Naive thymus-derived CD4-positive, alpha-beta T cell (primary cell): ENCODE measurements at regions of chr7 and their contacts with region 1.

Region 1: GRCh38 chr7:33895025-33895804 is 10.1 kb upstream of the BMPER start:
- DNase-seq: peak; percentile 4 to 68 (median 48)
- ATAC-seq: peak; percentile 87
- H3K4me3 ChIP-seq: no peak overlapping the region
- H3K4me3 Mint-ChIP-seq: peak overlapping the region in 4 of 10 donors; percentile 21 to 68 (median 47)
- H3K27ac ChIP-seq: no peak overlapping the region
- H3K27ac Mint-ChIP-seq: no peak overlapping the region
- H3K4me1 ChIP-seq: no peaks in the 10 kb centered on the region
- H3K4me1 Mint-ChIP-seq: peaks cover 0 to 9% (median 5%) of the 10 kb centered on the region in 7 donors
- H3K27me3 ChIP-seq: no peaks in the 10 kb centered on the region
- H3K27me3 Mint-ChIP-seq: peaks cover 30 to 57% (median 48%) of the 10 kb centered on the region in 5 donors

Region 2: GRCh38 chr7:33185786-33186185 is 709.4 kb before region 1 on chr7:
- CTCF ChIA-PET with region 1: interaction called, 3 read pairs
- POLR2A ChIA-PET with region 1: no interaction called
- intact Hi-C with region 1: loop called in 1 of 2 experiments (anchors 1 kb)
- DNase-seq: peak in 5 of 9 donors; percentile 22 to 40 (median 33)
- ATAC-seq: peak; percentile 61
- H3K4me3 ChIP-seq: no peak overlapping the region
- H3K4me3 Mint-ChIP-seq: no peak overlapping the region
- H3K27ac ChIP-seq: no peak overlapping the region
- H3K27ac Mint-ChIP-seq: no peak overlapping the region
- H3K4me1 ChIP-seq: peaks cover 0 to 2% of the 10 kb centered on the region in 2 donors
- H3K4me1 Mint-ChIP-seq: peaks cover 3 to 12% (median 7%) of the 10 kb centered on the region in 7 donors
- H3K27me3 ChIP-seq: no peaks in the 10 kb centered on the region
- H3K27me3 Mint-ChIP-seq: no peaks in the 10 kb centered on the region